Heart right ventricle (tissue), 16 donors: ENCODE measurements at regions of chr9 and their contacts with region 1.

Region 1: DNA sequence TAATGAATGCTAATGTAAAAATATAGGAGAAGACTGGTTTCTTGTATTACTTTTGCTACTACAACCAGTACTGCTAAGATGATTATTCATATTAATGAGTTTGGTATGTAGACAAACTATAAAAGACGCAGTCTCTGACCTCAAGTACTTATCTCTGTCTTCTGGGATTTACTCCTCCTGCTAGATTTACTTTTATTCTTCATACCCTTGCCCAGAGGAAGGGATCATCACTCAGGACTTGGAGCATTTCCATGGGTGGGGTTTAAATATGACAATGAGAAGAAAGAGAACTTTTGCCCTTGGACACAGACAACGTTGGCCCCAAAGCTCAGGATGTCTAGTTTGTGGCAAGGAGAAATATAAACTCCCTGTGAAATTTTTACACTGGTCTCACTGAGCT is 126.1 kb downstream of the BNC2 start:
- DNase-seq: no peak
- ATAC-seq: peak in 2 of 8 donors; percentile 4 to 25
- H3K4me3 ChIP-seq: no peak overlapping the region
- H3K27ac ChIP-seq: no peak overlapping the region
- H3K4me1 ChIP-seq: peaks cover 0 to 13% (median 0%) of the 10 kb centered on the region in 9 donors
- H3K27me3 ChIP-seq: no peaks in the 10 kb centered on the region
- CTCF ChIP-seq: no peak

Region 2: DNA sequence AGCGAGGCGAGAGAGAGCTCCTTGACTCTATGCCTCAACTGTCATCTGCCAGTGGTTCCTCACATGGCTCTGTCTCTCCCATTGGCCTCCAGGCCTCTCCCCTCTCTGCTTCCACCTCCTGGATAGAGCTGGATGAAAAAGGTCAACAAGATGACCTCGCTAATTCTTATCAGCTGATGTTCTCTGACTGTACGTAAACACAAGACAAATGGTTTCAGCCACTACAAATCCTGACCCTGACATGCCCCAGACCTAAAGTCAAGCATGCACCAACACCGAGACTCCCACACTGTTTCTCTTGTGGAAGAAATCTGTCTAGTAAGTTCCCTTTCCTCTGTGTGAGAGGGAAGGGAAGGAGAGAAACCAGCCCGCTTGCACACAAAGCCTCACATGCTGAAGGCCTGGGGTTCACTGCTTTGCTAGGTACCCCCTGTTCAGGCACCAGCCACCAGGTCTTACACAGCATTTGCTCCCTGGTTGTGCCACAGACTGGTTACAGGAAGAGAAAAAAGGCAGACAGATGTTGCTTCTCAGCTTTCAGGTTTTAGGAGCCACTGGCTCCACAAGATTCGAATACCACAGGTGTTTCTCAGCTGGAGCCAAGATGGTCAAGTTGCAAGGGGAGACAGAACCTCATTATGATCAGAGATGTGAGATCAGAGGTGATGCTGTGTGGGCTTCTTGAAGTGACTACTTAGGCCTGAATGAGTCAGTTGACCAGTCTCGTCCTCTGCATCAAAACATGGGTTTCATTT is 599.0 kb before region 1 on chr9:
- intact Hi-C with region 1: no loop called
- DNase-seq: no peak
- ATAC-seq: no peak
- H3K4me3 ChIP-seq: no peak overlapping the region
- H3K27ac ChIP-seq: no peak overlapping the region
- H3K4me1 ChIP-seq: peaks cover 0 to 8% (median 0%) of the 10 kb centered on the region in 9 donors
- H3K27me3 ChIP-seq: no peaks in the 10 kb centered on the region
- CTCF ChIP-seq: no peak

Region 3: GRCh38 chr9:16611983-16612382 is 132.4 kb before region 1 on chr9:
- intact Hi-C with region 1: no loop called
- DNase-seq: no peak
- ATAC-seq: no peak
- H3K4me3 ChIP-seq: no peak overlapping the region
- H3K27ac ChIP-seq: no peak overlapping the region
- H3K4me1 ChIP-seq: no peaks in the 10 kb centered on the region
- H3K27me3 ChIP-seq: no peaks in the 10 kb centered on the region
- CTCF ChIP-seq: no peak

Region 4: GRCh38 chr9:16689352-16689938 is 54.9 kb before region 1 on chr9:
- intact Hi-C with region 1: loop called in 1 of 10 experiments (anchors 10 kb)
- DNase-seq: peak; percentile 18 to 24
- ATAC-seq: peak in 3 of 8 donors; percentile 42 to 50 (median 46)
- H3K4me3 ChIP-seq: no peak overlapping the region
- H3K27ac ChIP-seq: peak overlapping the region in 1 of 10 donors; percentile 34
- H3K4me1 ChIP-seq: peaks cover 0 to 25% (median 6%) of the 10 kb centered on the region in 9 donors
- H3K27me3 ChIP-seq: peaks cover 0 to 5% (median 0%) of the 10 kb centered on the region in 7 donors
- CTCF ChIP-seq: no peak